Activated naive CD8-positive, alpha-beta T cell treated with anti-CD3 and anti-CD28 coated beads, Interleukin-2, amount 10 ng/mL, durations not matched to agents 7 days and 5 days (primary cell): ENCODE measurements at regions of chr14 and their contacts with region 1.

Region 1: DNA sequence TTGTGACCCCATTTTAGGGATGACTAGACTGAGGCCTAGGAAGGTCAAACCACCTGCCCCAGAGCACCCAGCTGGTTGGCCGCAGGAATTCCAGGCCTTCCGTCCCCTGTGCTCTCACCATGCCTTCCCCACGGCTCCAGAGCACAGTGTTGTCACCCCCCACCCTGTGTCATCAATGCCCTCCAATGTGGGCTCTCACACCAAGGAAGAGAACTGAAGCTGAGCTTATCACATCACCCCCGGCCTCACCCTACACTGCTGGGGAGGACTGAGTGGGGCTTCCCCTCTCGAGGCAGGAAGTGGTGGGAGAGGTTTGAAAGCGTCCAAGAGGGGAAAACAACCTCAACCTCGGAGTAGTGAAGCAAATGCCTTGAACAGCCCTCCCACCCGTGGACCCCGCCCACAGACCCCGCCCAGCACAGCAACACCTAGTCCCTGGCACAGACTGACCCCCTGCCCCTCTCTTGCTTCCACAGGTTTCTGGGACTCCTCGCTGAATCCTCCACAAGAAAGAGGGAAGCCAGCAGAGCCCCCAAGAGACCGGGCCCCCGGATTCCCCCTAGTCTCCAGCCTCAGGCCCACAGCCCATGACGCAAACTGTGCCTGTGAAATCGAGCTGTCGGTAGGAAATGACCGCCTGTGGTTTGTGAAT is 97.2 kb downstream of the LGMN start:
- DNase-seq: peak; percentile 77
- ATAC-seq: peak; percentile 79
- H3K4me3 Mint-ChIP-seq: peak overlapping the region; percentile 99
- H3K27ac Mint-ChIP-seq: peak overlapping the region; percentile 99
- H3K4me1 Mint-ChIP-seq: peaks cover 79% of the 10 kb centered on the region
- H3K27me3 Mint-ChIP-seq: no peaks in the 10 kb centered on the region

Region 2: DNA sequence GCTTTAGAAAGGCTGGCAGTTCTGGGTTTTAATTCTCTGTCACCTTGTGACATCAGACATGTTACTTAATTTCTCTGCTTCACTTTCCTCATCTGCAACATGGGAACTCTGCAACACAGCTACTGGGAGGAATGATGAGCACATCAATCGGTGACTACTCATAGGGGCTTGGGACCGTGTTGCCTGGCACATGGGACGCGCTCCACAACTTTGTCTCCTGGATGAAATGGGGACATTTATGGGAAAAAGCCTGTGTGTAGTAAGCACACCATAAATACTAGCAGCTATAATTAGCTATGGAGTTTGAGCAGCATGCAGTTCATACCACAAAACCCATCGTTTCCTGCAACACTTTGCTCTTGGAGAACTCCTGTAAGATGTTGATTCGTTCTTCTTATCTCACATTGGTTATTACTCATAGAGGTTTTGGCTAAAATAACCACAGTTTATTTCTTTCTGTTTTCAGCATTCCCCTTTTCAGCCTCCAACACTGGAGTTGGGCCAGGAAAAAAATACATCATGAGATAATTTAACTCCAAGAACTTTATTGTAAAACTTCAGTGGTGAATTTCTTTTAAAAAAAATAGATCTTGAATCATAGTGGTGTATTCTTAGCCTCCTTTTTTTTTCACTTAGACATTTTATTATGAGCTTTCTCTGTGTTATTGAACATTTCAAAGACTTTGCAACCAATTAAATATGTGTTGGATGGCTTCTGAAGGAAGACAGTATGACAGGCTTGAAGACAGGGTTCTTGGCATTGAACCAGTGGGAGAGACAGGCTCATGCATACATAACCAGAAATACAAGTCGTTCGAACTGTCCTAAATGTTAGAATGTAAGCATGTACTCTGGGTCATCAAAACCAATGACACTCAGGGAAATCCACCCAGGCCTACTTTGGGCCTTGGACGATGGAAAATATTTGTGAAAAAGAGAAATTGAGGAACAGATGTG is 65.0 kb before region 1 on chr14:
- POLR2A ChIA-PET with region 1: interaction called, 43 read pairs
- DNase-seq: peak; percentile 53
- ATAC-seq: peak; percentile 62
- H3K4me3 Mint-ChIP-seq: peak overlapping the region; percentile 73
- H3K27ac Mint-ChIP-seq: peak overlapping the region; percentile 89
- H3K4me1 Mint-ChIP-seq: peaks cover 79% of the 10 kb centered on the region
- H3K27me3 Mint-ChIP-seq: no peaks in the 10 kb centered on the region

Region 3: DNA sequence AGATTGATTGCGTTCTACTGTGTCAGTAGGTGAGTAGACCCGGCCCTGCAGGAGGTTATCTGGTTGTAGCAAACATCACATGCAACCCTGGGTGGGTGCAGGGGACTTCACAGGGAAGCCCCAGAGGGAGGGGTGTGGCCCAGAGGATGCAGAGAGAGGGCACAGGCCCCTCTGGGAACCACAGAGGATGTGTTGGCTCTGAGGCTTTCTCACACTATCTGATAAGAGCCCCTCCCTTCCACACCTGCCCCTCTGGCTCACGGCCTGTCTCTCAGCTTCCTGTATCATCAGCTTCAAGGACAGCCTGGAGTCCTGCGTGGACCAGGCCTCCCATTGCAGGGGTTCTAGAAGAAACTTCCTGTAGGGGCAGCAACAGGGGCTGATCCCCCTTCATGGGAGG is 35.8 kb before region 1 on chr14:
- POLR2A ChIA-PET with region 1: interaction called, 31 read pairs
- DNase-seq: peak; percentile 72
- ATAC-seq: peak; percentile 98
- H3K4me3 Mint-ChIP-seq: peak overlapping the region; percentile 62
- H3K27ac Mint-ChIP-seq: peak overlapping the region; percentile 91
- H3K4me1 Mint-ChIP-seq: peaks cover 35% of the 10 kb centered on the region
- H3K27me3 Mint-ChIP-seq: no peaks in the 10 kb centered on the region

Region 4: GRCh38 chr14:92626041-92626440 is 25.2 kb before region 1 on chr14:
- POLR2A ChIA-PET with region 1: no interaction called
- DNase-seq: no peak
- ATAC-seq: no peak
- H3K4me3 Mint-ChIP-seq: no peak overlapping the region
- H3K27ac Mint-ChIP-seq: no peak overlapping the region
- H3K4me1 Mint-ChIP-seq: no peaks in the 10 kb centered on the region
- H3K27me3 Mint-ChIP-seq: no peaks in the 10 kb centered on the region

Region 5: DNA sequence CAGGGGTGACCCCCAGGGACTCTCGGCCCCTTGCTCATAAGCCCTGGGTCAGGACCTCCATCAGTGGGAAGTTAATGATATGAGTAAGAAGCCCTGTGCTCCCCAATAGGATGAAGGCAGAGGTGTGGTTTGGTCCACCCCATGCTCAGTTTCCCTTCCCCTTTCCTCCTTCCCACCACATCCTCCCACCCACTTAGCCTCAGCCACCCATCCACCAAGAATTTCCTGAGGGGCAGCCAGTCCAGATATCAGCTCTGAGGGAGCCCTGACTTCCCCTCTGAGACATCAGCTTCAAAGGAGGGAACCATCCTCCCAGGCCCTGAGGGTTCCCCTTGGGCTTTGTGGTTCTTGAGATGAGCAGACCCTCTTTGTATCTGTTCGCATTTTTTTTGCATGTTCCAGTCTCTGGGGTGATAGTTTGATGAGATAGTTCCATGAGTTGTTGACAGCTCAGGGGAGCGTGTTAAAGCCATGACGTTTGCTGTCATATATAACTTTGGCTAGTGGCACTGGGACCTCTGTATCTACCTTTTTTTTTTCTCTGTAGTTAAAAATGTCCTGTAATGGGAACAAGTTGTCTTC is 25.9 kb after region 1 on chr14:
- POLR2A ChIA-PET with region 1: interaction called, 10 read pairs
- DNase-seq: no peak
- ATAC-seq: peak; percentile 72
- H3K4me3 Mint-ChIP-seq: peak overlapping the region; percentile 14
- H3K27ac Mint-ChIP-seq: peak overlapping the region; percentile 51
- H3K4me1 Mint-ChIP-seq: peaks cover 42% of the 10 kb centered on the region
- H3K27me3 Mint-ChIP-seq: no peaks in the 10 kb centered on the region

Region 6: GRCh38 chr14:92728759-92729370 is 77.6 kb after region 1 on chr14:
- POLR2A ChIA-PET with region 1: no interaction called
- DNase-seq: no peak
- ATAC-seq: peak; percentile 54
- H3K4me3 Mint-ChIP-seq: no peak overlapping the region
- H3K27ac Mint-ChIP-seq: no peak overlapping the region
- H3K4me1 Mint-ChIP-seq: peaks cover 12% of the 10 kb centered on the region
- H3K27me3 Mint-ChIP-seq: peaks cover 29% of the 10 kb centered on the region